Activated naive CD4-positive, alpha-beta T cell treated with anti-CD3 and anti-CD28 coated beads, Interleukin-2, amount 10 ng/mL, durations not matched to agents 7 days and 5 days (primary cell): ENCODE measurements at regions of chr11 and their contacts with region 1.

Region 1: GRCh38 chr11:60913793-60914632 is at the start of gene TMEM109:
- DNase-seq: peak; percentile 91
- H3K4me3 Mint-ChIP-seq: peak within 1 kb of the TSS; percentile 92
- H3K27ac Mint-ChIP-seq: peak within 1 kb of the TSS; percentile 96
- H3K4me1 Mint-ChIP-seq: peaks cover 57% of the 10 kb centered on the region
- H3K27me3 Mint-ChIP-seq: peaks cover 11% of the 10 kb centered on the region

Region 2: DNA sequence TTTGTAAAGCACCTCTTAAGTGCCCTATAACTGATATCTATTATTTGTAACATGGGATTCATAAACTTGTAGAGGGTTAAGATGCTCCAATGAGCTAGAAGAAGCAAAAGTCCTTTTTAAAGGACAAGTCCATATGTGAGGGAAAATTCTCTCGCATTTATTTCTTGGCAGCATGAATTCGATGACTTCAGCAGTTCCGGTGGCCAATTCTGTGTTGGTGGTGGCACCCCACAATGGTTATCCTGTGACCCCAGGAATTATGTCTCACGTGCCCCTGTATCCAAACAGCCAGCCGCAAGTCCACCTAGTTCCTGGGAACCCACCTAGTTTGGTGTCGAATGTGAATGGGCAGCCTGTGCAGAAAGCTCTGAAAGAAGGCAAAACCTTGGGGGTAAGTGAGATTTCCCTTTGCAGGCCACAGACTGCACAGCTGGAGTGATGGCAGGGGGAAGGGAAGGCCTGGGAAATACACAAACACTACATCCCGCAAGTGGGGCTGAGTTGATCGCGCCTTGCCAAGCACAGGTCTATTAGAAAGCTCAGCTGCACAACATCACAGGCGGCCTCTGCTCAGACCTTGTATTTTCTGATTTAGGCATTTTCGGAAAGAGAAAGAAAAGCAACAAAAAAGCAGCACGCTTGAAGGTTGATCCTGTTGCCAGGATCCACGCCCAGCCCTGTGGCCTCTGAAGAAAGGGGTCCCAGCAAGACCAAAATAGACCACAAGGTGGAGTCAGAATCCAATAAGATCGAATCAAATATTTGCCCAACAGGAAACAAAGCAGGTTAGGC is 213.1 kb before region 1 on chr11:
- CTCF ChIA-PET with region 1: no interaction called
- DNase-seq: no peak
- H3K4me3 Mint-ChIP-seq: no peak overlapping the region
- H3K27ac Mint-ChIP-seq: no peak overlapping the region
- H3K4me1 Mint-ChIP-seq: no peaks in the 10 kb centered on the region
- H3K27me3 Mint-ChIP-seq: peaks cover 5% of the 10 kb centered on the region

Region 3: GRCh38 chr11:60928259-60929001 is 14.4 kb after region 1 on chr11:
- CTCF ChIA-PET with region 1: interaction called, 11 read pairs
- DNase-seq: no peak
- H3K4me3 Mint-ChIP-seq: no peak overlapping the region
- H3K27ac Mint-ChIP-seq: no peak overlapping the region
- H3K4me1 Mint-ChIP-seq: peaks cover 10% of the 10 kb centered on the region
- H3K27me3 Mint-ChIP-seq: peaks cover 87% of the 10 kb centered on the region